CD8-positive, alpha-beta memory T cell (primary cell): ENCODE measurements at regions of chr11 and their contacts with region 1.

Region 1: DNA sequence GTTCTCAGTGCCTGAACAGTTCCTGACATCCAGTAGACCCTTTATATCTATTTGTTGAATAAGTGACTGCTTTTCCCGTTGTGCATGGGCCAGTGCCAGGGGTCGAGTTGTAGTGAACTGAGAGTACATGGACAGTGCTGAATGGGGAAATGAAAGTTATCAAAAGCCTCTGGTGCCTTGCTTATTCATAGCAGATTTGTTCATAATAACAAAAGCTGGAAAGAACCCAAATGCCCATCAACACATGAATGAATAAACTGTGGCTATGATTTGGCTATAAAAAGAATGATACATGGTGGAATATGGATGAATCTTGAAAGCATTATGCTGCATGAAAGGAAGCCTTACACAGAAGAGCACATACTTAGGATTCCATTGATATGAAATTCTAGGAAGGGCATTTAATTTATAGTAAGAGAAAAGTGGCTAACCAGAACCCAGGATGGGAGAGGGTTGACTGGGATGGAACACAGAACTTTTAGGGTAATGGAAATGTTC is 42.6 kb downstream of the PACS1 start:
- DNase-seq: no peak
- H3K4me3 ChIP-seq: no peak overlapping the region
- H3K4me3 Mint-ChIP-seq: peak overlapping the region in 5 of 7 donors; percentile 2 to 58 (median 25)
- H3K27ac ChIP-seq: no peak overlapping the region
- H3K27ac Mint-ChIP-seq: peak overlapping the region; percentile 64 to 88 (median 80)
- H3K4me1 ChIP-seq: peaks cover 84% of the 10 kb centered on the region
- H3K4me1 Mint-ChIP-seq: peaks cover 89 to 99% (median 97%) of the 10 kb centered on the region in 3 donors
- H3K27me3 ChIP-seq: no peaks in the 10 kb centered on the region
- H3K27me3 Mint-ChIP-seq: no peaks in the 10 kb centered on the region

Region 2: DNA sequence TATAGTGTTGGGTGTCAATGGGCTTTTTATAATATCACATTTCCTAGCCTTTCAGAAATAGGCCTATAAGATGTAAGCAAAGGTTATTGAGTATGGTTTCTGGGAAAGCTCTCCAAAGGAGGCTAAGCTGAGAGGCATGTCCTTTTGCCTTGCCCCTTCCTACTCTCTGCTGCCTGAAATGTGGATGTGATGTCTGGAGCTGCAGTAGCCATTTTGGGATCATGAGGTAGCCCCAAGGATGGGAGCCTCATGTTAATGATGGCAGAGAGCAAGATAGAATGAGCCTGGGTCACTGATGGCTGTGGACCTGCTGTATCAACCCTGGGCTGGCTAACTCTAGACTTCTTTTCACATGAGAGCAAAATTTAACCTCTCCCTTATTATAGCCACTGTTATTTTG is 1724.7 kb before region 1 on chr11:
- CTCF ChIA-PET with region 1: no interaction called
- POLR2A ChIA-PET with region 1: interaction called, 10 read pairs
- DNase-seq: no peak
- H3K4me3 ChIP-seq: no peak overlapping the region
- H3K4me3 Mint-ChIP-seq: peak overlapping the region in 1 of 7 donors; percentile 2
- H3K27ac ChIP-seq: no peak overlapping the region
- H3K27ac Mint-ChIP-seq: no peak overlapping the region
- H3K4me1 ChIP-seq: peaks cover 5% of the 10 kb centered on the region
- H3K4me1 Mint-ChIP-seq: peaks cover 19 to 44% (median 20%) of the 10 kb centered on the region in 3 donors
- H3K27me3 ChIP-seq: peaks cover 6% of the 10 kb centered on the region
- H3K27me3 Mint-ChIP-seq: peaks cover 0 to 3% of the 10 kb centered on the region in 2 donors

Region 3: GRCh38 chr11:65947146-65947545 is 165.5 kb before region 1 on chr11:
- CTCF ChIA-PET with region 1: no interaction called
- POLR2A ChIA-PET with region 1: no interaction called
- DNase-seq: no peak
- H3K4me3 ChIP-seq: no peak overlapping the region
- H3K4me3 Mint-ChIP-seq: no peak overlapping the region
- H3K27ac ChIP-seq: no peak overlapping the region
- H3K27ac Mint-ChIP-seq: no peak overlapping the region
- H3K4me1 ChIP-seq: no peaks in the 10 kb centered on the region
- H3K4me1 Mint-ChIP-seq: no peaks in the 10 kb centered on the region
- H3K27me3 ChIP-seq: no peaks in the 10 kb centered on the region
- H3K27me3 Mint-ChIP-seq: peaks cover 0 to 2% of the 10 kb centered on the region in 2 donors

Region 4: GRCh38 chr11:66051766-66052663 is 60.6 kb before region 1 on chr11 and contains the start of gene SF3B2:
- CTCF ChIA-PET with region 1: no interaction called
- POLR2A ChIA-PET with region 1: interaction called, 11 read pairs
- DNase-seq: peak; percentile 93 to 97 (median 95)
- H3K4me3 ChIP-seq: peak within 1 kb of the TSS; percentile 79
- H3K4me3 Mint-ChIP-seq: peak within 1 kb of the TSS; percentile 98 to 100 (median 99)
- H3K27ac ChIP-seq: peak within 1 kb of the TSS; percentile 86
- H3K27ac Mint-ChIP-seq: peak within 1 kb of the TSS; percentile 96 to 99 (median 99)
- H3K4me1 ChIP-seq: peaks cover 23% of the 10 kb centered on the region
- H3K4me1 Mint-ChIP-seq: peaks cover 27 to 38% (median 34%) of the 10 kb centered on the region in 3 donors
- H3K27me3 ChIP-seq: no peaks in the 10 kb centered on the region
- H3K27me3 Mint-ChIP-seq: peaks cover 4 to 6% of the 10 kb centered on the region in 2 donors
- total RNA-seq, gene SF3B2: 261 to 274 TPM

Region 5: DNA sequence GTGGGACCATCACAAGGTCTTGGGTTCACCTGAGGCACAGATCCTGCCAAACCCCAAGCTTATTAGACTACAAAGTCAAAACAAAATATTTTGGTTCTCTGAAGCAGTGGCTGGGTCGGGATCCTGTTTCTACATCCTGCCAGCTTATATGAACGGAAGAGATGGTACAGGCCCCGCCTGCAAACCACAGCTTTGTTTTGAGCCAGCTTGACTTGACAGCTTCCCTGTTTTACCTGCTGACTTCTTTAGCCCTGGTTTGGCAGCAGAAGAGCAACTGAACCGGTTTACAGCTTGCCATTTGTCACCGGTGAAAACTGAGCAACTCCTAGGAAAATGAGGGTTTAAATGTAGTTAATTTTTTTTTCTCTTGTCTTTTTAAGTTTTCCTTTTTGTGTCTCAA is 31.1 kb before region 1 on chr11:
- CTCF ChIA-PET with region 1: interaction called, 9 read pairs
- POLR2A ChIA-PET with region 1: interaction called, 11 read pairs
- DNase-seq: peak; percentile 59 to 88 (median 74)
- H3K4me3 ChIP-seq: peak overlapping the region; percentile 37
- H3K4me3 Mint-ChIP-seq: peak overlapping the region; percentile 84 to 95 (median 93)
- H3K27ac ChIP-seq: peak overlapping the region; percentile 52
- H3K27ac Mint-ChIP-seq: peak overlapping the region; percentile 94 to 99 (median 99)
- H3K4me1 ChIP-seq: peaks cover 90% of the 10 kb centered on the region
- H3K4me1 Mint-ChIP-seq: peaks cover 83 to 90% (median 86%) of the 10 kb centered on the region in 3 donors
- H3K27me3 ChIP-seq: no peaks in the 10 kb centered on the region
- H3K27me3 Mint-ChIP-seq: peaks cover 0 to 2% of the 10 kb centered on the region in 2 donors

Region 6: GRCh38 chr11:66126808-66127555 is 14.3 kb after region 1 on chr11:
- CTCF ChIA-PET with region 1: interaction called, 14 read pairs
- POLR2A ChIA-PET with region 1: interaction called, 4 read pairs
- DNase-seq: peak; percentile 7 to 71 (median 49)
- H3K4me3 ChIP-seq: peak overlapping the region; percentile 0
- H3K4me3 Mint-ChIP-seq: peak overlapping the region in 6 of 7 donors; percentile 45 to 82 (median 72)
- H3K27ac ChIP-seq: no peak overlapping the region
- H3K27ac Mint-ChIP-seq: peak overlapping the region; percentile 82 to 97 (median 92)
- H3K4me1 ChIP-seq: peaks cover 67% of the 10 kb centered on the region
- H3K4me1 Mint-ChIP-seq: peaks cover 72 to 84% (median 82%) of the 10 kb centered on the region in 3 donors
- H3K27me3 ChIP-seq: no peaks in the 10 kb centered on the region
- H3K27me3 Mint-ChIP-seq: no peaks in the 10 kb centered on the region

Region 7: DNA sequence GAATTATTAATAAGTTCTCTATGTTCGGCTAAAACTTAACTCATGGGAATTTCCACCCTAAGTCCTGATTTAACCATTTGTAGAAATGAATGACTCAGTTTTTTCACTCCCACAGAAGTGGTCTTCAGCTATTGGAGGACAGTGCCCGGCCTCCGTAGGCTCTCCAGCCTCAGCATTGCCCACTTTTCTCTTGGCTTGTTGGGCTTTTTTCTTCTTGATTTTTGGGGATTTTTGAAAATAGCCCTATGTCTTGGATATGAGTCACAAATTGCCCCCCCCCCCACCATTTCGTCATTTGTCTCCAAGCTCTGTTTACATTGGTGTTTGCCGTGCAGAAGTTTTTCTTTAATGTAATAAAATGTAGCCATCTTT is 24.1 kb after region 1 on chr11:
- CTCF ChIA-PET with region 1: interaction called, 34 read pairs
- POLR2A ChIA-PET with region 1: interaction called, 8 read pairs
- DNase-seq: no peak
- H3K4me3 ChIP-seq: no peak overlapping the region
- H3K4me3 Mint-ChIP-seq: no peak overlapping the region
- H3K27ac ChIP-seq: no peak overlapping the region
- H3K27ac Mint-ChIP-seq: peak overlapping the region in 7 of 8 donors; percentile 13 to 71 (median 50)
- H3K4me1 ChIP-seq: peaks cover 14% of the 10 kb centered on the region
- H3K4me1 Mint-ChIP-seq: peaks cover 45 to 70% (median 62%) of the 10 kb centered on the region in 3 donors
- H3K27me3 ChIP-seq: no peaks in the 10 kb centered on the region
- H3K27me3 Mint-ChIP-seq: peaks cover 0 to 1% of the 10 kb centered on the region in 2 donors